Transverse colon (tissue), 4 donors: ENCODE measurements at regions of chr1 and their contacts with region 1.

Region 1: DNA sequence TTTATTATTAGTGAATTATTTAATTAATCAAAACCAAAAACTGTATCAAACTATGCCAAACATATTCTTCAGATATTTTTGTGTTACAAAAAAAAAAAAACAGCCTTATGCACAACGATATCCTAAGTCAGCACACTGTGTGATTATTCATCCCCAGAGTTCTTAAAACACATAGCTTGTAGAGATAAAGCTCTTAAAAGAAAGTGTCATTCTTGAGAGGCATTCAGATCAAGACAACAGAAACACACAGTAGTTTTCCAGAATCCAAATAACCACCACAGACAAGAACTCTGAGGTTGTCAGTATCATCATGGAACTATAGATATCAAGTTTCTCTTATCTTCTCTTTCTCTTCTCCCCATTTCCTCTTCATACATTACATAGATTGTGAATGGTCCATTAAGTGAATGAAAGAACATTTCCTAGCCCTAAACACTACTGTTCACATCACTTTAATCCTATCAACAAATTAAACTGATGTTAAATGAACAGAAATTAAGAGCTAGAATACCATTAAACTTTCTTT is 13.5 kb downstream of the ZZZ3 start:
- DNase-seq: no peak
- H3K4me3 ChIP-seq: no peak overlapping the region
- H3K27ac ChIP-seq: no peak overlapping the region
- H3K4me1 ChIP-seq: peaks cover 0 to 41% (median 7%) of the 10 kb centered on the region in 4 donors
- H3K27me3 ChIP-seq: no peaks in the 10 kb centered on the region
- CTCF ChIP-seq: no peak
- EP300 ChIP-seq: no peak
- POLR2A ChIP-seq: no peak

Region 2: GRCh38 chr1:77686796-77687518 is 18.0 kb after region 1 on chr1:
- in situ Hi-C with region 1: no loop called
- intact Hi-C with region 1: loop called (anchors 1 kb)
- DNase-seq: no peak
- H3K4me3 ChIP-seq: peak overlapping the region in 2 of 4 donors; percentile 20 to 27
- H3K27ac ChIP-seq: no peak overlapping the region
- H3K4me1 ChIP-seq: peaks cover 0 to 11% (median 9%) of the 10 kb centered on the region in 4 donors
- H3K27me3 ChIP-seq: no peaks in the 10 kb centered on the region
- CTCF ChIP-seq: no peak
- EP300 ChIP-seq: no peak
- POLR2A ChIP-seq: no peak